ENCODE measurements at regions of chr14 and their contacts with region 1.

Region 1: DNA sequence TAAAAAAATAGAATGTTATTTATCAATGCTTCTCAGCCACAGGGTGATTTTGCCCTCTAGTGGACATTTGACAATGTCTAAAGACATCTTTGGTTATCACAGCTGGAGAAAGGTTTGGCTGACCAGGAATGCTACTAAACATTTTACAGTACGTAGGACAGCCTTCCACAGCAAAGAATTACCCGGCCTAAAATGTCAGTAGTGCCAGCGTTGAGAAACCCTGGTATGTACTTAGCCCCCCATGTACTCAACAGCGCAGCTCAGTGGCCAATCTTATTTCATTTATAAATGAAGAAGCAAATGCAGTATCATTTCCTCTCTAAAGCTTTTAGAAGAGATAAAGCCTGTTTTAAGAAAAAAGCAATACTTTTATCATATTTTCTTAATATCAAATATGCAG is 5.8 kb downstream of the MARK3 start:
- DNase-seq: peak; percentile 4 to 78 (median 54)
- ATAC-seq: peak; percentile 74
- H3K4me3 ChIP-seq: no peak overlapping the region
- H3K4me3 Mint-ChIP-seq: no peak overlapping the region
- H3K27ac ChIP-seq: peak overlapping the region in 1 of 2 experiments; percentile 3
- H3K27ac Mint-ChIP-seq: peak overlapping the region; percentile 10
- H3K4me1 ChIP-seq: peaks cover 57% of the 10 kb centered on the region
- H3K4me1 Mint-ChIP-seq: peaks cover 66% of the 10 kb centered on the region
- H3K27me3 ChIP-seq: no peaks in the 10 kb centered on the region
- H3K27me3 Mint-ChIP-seq: no peaks in the 10 kb centered on the region
- CTCF ChIP-seq: peak; percentile 83

Region 2: GRCh38 chr14:103402695-103403094 is 11.6 kb after region 1 on chr14:
- CTCF ChIA-PET with region 1: interaction called, 34 read pairs
- POLR2A ChIA-PET with region 1: interaction called, 6 read pairs
- intact Hi-C with region 1: no loop called
- DNase-seq: no peak
- ATAC-seq: no peak
- H3K4me3 ChIP-seq: no peak overlapping the region
- H3K4me3 Mint-ChIP-seq: no peak overlapping the region
- H3K27ac ChIP-seq: no peak overlapping the region
- H3K27ac Mint-ChIP-seq: no peak overlapping the region
- H3K4me1 ChIP-seq: peaks cover 50% of the 10 kb centered on the region
- H3K4me1 Mint-ChIP-seq: peaks cover 59% of the 10 kb centered on the region
- H3K27me3 ChIP-seq: no peaks in the 10 kb centered on the region
- H3K27me3 Mint-ChIP-seq: no peaks in the 10 kb centered on the region
- CTCF ChIP-seq: no peak

Region 3: DNA sequence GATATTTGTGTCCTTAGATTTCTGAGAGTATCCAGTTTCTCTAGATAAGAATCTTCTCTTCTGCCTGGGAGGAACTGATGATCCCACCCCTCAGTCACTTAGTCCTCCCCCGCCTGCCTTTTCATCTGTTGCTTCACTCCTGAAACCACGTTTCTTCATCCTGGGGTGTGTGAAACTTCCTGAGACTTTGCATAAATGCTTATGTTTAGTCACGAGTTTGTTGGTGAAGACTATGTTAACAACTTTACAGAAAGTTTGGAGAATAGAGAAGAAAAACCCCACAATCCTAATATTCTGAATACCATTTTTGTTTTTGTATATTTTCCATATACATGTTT is 27.4 kb after region 1 on chr14:
- CTCF ChIA-PET with region 1: interaction called, 11 read pairs
- POLR2A ChIA-PET with region 1: no interaction called
- intact Hi-C with region 1: no loop called
- DNase-seq: no peak
- ATAC-seq: no peak
- H3K4me3 ChIP-seq: no peak overlapping the region
- H3K4me3 Mint-ChIP-seq: no peak overlapping the region
- H3K27ac ChIP-seq: no peak overlapping the region
- H3K27ac Mint-ChIP-seq: peak overlapping the region; percentile 4
- H3K4me1 ChIP-seq: no peaks in the 10 kb centered on the region
- H3K4me1 Mint-ChIP-seq: peaks cover 49% of the 10 kb centered on the region
- H3K27me3 ChIP-seq: no peaks in the 10 kb centered on the region
- H3K27me3 Mint-ChIP-seq: no peaks in the 10 kb centered on the region
- CTCF ChIP-seq: no peak

Region 4: GRCh38 chr14:103444837-103445524 is 53.9 kb after region 1 on chr14:
- CTCF ChIA-PET with region 1: interaction called, 10 read pairs
- POLR2A ChIA-PET with region 1: no interaction called
- intact Hi-C with region 1: no loop called
- DNase-seq: no peak
- ATAC-seq: no peak
- H3K4me3 ChIP-seq: no peak overlapping the region
- H3K4me3 Mint-ChIP-seq: no peak overlapping the region
- H3K27ac ChIP-seq: no peak overlapping the region
- H3K27ac Mint-ChIP-seq: no peak overlapping the region
- H3K4me1 ChIP-seq: no peaks in the 10 kb centered on the region
- H3K4me1 Mint-ChIP-seq: peaks cover 55% of the 10 kb centered on the region
- H3K27me3 ChIP-seq: no peaks in the 10 kb centered on the region
- H3K27me3 Mint-ChIP-seq: no peaks in the 10 kb centered on the region
- CTCF ChIP-seq: no peak

Measured in CD8-positive, alpha-beta T cell (primary cell).